ENCODE measurements at regions of chr12 and their contacts with region 1.

Region 1: DNA sequence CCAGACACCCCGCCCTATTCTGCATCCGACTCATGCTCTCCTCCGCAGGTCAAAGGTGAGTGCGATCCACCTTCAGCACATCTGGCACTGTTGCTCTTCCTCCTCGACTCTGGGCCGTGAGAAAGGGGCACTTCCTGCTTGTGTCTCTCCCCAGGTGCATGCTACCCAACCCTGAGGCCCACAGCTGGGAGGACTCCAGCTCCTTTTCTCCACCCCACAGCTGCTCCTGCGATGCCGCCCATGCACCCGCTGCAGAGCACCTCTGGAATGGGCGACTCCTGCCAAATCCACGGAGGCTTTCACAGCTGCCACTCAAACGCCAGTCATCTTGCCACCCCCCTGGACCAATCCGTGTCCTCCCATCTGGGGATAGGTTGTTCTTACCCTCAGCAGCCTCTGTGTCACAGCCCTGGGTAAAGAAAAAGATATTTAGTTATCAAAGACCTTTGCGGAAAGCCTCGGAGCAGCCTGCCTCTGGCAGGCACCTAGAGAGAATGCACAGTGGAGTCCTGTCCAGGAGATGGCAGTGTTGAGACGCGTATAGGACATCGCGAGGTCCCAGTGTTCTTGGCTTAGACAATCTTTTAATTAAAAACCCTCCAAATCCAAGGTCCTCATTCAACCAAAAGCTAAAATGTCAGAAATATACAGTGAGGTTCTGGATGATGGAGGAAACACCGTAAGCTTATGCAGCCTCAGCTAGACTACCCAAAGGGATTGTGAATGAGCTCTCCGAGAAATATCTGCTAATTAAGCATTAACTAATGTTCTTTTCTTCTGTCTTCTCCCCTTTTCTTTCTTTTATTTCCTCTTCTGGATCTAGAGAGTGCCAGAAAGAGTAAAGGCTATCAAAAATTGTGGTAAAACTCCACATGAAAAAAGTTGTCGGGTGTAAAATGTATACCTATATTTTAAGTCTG is 54.3 kb downstream of the MYRFL start:
- DNase-seq: peak; percentile 76
- H3K4me3 ChIP-seq: no peak overlapping the region
- H3K27ac ChIP-seq: no peak overlapping the region
- H3K4me1 ChIP-seq: no peaks in the 10 kb centered on the region
- H3K27me3 ChIP-seq: no peaks in the 10 kb centered on the region
- CTCF ChIP-seq: peak; percentile 87
- POLR2A ChIP-seq: no peak

Region 2: GRCh38 chr12:69779928-69780327 is 99.4 kb before region 1 on chr12:
- CTCF ChIA-PET with region 1: interaction called, 77 read pairs
- POLR2A ChIA-PET with region 1: no interaction called
- dilution Hi-C with region 1: no loop called
- intact Hi-C with region 1: loop called (anchors 5 kb)
- DNase-seq: peak; percentile 67
- H3K4me3 ChIP-seq: no peak overlapping the region
- H3K27ac ChIP-seq: no peak overlapping the region
- H3K4me1 ChIP-seq: no peaks in the 10 kb centered on the region
- H3K27me3 ChIP-seq: no peaks in the 10 kb centered on the region
- CTCF ChIP-seq: peak; percentile 58 to 73
- POLR2A ChIP-seq: no peak

Region 3: DNA sequence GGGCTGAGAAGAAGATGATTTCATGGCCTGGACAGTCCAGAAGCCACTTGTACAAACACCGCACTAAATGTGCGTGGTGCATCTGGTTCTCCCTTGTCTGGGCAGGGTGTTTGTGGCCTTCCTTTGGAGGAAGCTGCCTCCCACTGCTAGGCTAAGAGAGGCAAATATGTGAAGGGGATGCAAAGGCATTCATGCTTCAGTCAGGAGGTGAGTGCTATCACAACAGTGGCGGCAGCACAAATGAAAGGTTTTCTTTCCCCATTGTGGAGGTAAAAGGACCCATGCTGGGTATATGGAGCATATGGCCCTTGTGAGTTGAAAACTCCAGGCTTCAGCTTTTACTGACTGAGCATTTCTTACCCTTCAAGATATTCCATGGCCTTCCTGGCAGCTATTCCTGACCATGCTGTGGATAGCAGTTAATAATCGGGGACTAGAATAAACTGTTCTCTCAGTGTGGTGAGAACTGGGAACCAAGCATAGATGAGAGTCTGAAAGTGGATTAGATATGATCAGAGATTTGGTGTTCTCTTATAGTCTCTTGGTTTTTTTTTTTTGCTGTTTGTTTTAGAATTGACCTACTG is 15.6 kb after region 1 on chr12:
- CTCF ChIA-PET with region 1: interaction called, 30 read pairs
- POLR2A ChIA-PET with region 1: no interaction called
- dilution Hi-C with region 1: no loop called
- intact Hi-C with region 1: no loop called
- DNase-seq: no peak
- H3K4me3 ChIP-seq: no peak overlapping the region
- H3K27ac ChIP-seq: no peak overlapping the region
- H3K4me1 ChIP-seq: no peaks in the 10 kb centered on the region
- H3K27me3 ChIP-seq: no peaks in the 10 kb centered on the region
- CTCF ChIP-seq: no peak
- POLR2A ChIP-seq: no peak

Region 4: GRCh38 chr12:69966409-69967207 is 87.3 kb after region 1 on chr12:
- CTCF ChIA-PET with region 1: no interaction called
- POLR2A ChIA-PET with region 1: no interaction called
- dilution Hi-C with region 1: no loop called
- intact Hi-C with region 1: no loop called
- DNase-seq: no peak
- H3K4me3 ChIP-seq: no peak overlapping the region
- H3K27ac ChIP-seq: no peak overlapping the region
- H3K4me1 ChIP-seq: no peaks in the 10 kb centered on the region
- H3K27me3 ChIP-seq: peaks cover 0 to 5% of the 10 kb centered on the region in 2 experiments
- CTCF ChIP-seq: no peak
- POLR2A ChIP-seq: no peak

Region 5: GRCh38 chr12:70049600-70050360 is 170.5 kb after region 1 on chr12:
- CTCF ChIA-PET with region 1: no interaction called
- POLR2A ChIA-PET with region 1: no interaction called
- dilution Hi-C with region 1: no loop called
- intact Hi-C with region 1: no loop called
- DNase-seq: no peak
- H3K4me3 ChIP-seq: no peak overlapping the region
- H3K27ac ChIP-seq: no peak overlapping the region
- H3K4me1 ChIP-seq: peaks cover 5% of the 10 kb centered on the region
- H3K27me3 ChIP-seq: no peaks in the 10 kb centered on the region
- CTCF ChIP-seq: no peak
- POLR2A ChIP-seq: no peak

Region 6: GRCh38 chr12:70517256-70517655 is 638.0 kb after region 1 on chr12:
- CTCF ChIA-PET with region 1: interaction called, 4 read pairs
- POLR2A ChIA-PET with region 1: no interaction called
- dilution Hi-C with region 1: no loop called
- intact Hi-C with region 1: loop called (anchors 10 kb)
- DNase-seq: no peak
- H3K4me3 ChIP-seq: no peak overlapping the region
- H3K27ac ChIP-seq: no peak overlapping the region
- H3K4me1 ChIP-seq: peaks cover 7% of the 10 kb centered on the region
- H3K27me3 ChIP-seq: no peaks in the 10 kb centered on the region
- CTCF ChIP-seq: no peak
- POLR2A ChIP-seq: peak; percentile 43

Region 7: GRCh38 chr12:70549340-70550179 is 670.3 kb after region 1 on chr12:
- CTCF ChIA-PET with region 1: interaction called, 6 read pairs
- POLR2A ChIA-PET with region 1: no interaction called
- dilution Hi-C with region 1: no loop called
- intact Hi-C with region 1: loop called (anchors 5 kb)
- DNase-seq: peak; percentile 93
- H3K4me3 ChIP-seq: no peak overlapping the region
- H3K27ac ChIP-seq: peak overlapping the region; percentile 76
- H3K4me1 ChIP-seq: peaks cover 38% of the 10 kb centered on the region
- H3K27me3 ChIP-seq: no peaks in the 10 kb centered on the region
- CTCF ChIP-seq: no peak
- POLR2A ChIP-seq: no peak

Region 8: DNA sequence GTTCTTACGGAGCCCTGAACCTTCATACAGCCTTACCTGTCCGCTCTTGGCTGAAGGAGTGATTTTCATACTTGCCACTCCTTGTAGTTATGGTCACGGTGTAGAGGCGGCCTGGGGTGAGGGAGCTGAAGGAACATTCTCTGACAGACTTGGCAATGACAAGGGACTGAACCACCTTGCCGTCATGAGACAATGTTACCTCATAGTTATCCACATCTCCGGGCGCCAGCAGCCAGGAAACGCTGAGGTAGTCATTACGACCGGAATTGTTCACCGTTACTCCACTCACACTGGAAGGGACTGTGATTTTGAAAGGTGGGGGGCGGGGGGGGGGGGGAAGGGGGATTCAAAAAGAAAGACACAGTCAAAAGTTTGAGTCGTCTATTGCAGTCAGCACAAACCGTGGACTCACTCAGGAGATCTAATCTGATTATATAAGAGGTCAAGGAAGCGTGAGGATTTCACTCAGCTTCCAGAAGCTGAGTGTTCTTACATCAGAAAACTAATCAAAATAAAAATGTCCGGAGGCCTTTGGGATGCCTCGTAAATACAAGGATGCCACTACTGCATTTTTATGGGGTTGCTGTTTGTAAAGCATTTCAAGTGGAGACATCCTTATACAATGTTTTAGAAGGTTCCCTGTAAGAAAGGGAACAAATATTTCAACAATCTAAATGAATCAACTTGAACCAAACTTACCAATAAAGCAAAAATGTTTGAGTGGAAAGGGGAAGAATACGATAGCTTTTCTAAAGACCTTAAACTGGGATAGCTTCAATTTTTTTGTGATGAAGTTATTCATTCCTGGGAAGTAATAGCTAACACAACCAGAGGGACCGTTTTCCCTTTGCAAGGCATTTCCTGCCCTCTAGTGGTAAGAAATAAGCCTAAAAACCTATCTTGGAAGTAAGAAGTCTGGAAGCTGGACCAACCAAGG is 697.3 kb after region 1 on chr12:
- CTCF ChIA-PET with region 1: interaction called, 62 read pairs
- POLR2A ChIA-PET with region 1: no interaction called
- dilution Hi-C with region 1: no loop called
- intact Hi-C with region 1: loop called (anchors 1 kb)
- DNase-seq: peak; percentile 68
- H3K4me3 ChIP-seq: no peak overlapping the region
- H3K27ac ChIP-seq: peak overlapping the region; percentile 35
- H3K4me1 ChIP-seq: peaks cover 13% of the 10 kb centered on the region
- H3K27me3 ChIP-seq: no peaks in the 10 kb centered on the region
- CTCF ChIP-seq: peak; percentile 59 to 62
- POLR2A ChIP-seq: no peak

Region 9: GRCh38 chr12:70823182-70823976 is 944.1 kb after region 1 on chr12:
- CTCF ChIA-PET with region 1: no interaction called
- POLR2A ChIA-PET with region 1: no interaction called
- dilution Hi-C with region 1: no loop called
- intact Hi-C with region 1: no loop called
- DNase-seq: no peak
- H3K4me3 ChIP-seq: no peak overlapping the region
- H3K27ac ChIP-seq: no peak overlapping the region
- H3K4me1 ChIP-seq: no peaks in the 10 kb centered on the region
- H3K27me3 ChIP-seq: no peaks in the 10 kb centered on the region
- CTCF ChIP-seq: no peak
- POLR2A ChIP-seq: no peak

Region 10: DNA sequence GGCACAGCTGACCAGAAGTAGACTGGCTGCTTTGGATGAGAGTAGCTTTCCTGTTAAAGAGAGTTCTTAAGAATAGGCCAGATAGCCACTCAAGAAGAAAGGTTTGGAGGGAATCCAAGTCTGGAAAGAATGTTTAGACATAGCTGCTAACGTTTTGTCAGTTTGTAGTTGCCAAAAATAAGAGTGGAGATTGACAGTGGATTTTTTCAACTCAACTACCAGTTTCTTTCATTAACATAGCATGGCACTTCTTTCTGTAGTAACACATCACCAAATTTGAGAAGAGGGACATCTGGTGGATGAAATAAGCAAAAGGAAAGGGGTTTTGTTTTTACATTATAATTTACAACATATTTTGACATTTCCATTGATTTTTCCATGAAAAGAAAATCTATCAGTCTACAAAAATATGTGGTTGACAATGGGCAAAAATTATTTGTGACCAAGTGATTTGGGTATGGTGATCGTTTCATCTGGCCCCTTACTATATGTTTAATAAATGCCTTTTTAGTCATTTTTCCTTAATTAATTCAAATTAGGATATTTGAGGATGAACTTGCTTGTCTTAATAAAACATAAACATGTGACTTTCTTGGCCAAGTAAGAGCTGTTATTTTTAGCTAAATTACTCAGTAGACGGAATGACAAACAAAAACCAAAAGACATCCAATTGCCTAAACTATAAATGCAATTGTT is 970.1 kb after region 1 on chr12:
- CTCF ChIA-PET with region 1: interaction called, 11 read pairs
- POLR2A ChIA-PET with region 1: no interaction called
- dilution Hi-C with region 1: no loop called
- intact Hi-C with region 1: loop called (anchors 2 kb)
- DNase-seq: peak; percentile 39
- H3K4me3 ChIP-seq: no peak overlapping the region
- H3K27ac ChIP-seq: no peak overlapping the region
- H3K4me1 ChIP-seq: no peaks in the 10 kb centered on the region
- H3K27me3 ChIP-seq: peaks cover 3 to 5% of the 10 kb centered on the region in 2 experiments
- CTCF ChIP-seq: peak in 1 of 2 donors; percentile 20
- POLR2A ChIP-seq: no peak